ENCODE measurements at regions of chr2 and their contacts with region 1.

Region 1: DNA sequence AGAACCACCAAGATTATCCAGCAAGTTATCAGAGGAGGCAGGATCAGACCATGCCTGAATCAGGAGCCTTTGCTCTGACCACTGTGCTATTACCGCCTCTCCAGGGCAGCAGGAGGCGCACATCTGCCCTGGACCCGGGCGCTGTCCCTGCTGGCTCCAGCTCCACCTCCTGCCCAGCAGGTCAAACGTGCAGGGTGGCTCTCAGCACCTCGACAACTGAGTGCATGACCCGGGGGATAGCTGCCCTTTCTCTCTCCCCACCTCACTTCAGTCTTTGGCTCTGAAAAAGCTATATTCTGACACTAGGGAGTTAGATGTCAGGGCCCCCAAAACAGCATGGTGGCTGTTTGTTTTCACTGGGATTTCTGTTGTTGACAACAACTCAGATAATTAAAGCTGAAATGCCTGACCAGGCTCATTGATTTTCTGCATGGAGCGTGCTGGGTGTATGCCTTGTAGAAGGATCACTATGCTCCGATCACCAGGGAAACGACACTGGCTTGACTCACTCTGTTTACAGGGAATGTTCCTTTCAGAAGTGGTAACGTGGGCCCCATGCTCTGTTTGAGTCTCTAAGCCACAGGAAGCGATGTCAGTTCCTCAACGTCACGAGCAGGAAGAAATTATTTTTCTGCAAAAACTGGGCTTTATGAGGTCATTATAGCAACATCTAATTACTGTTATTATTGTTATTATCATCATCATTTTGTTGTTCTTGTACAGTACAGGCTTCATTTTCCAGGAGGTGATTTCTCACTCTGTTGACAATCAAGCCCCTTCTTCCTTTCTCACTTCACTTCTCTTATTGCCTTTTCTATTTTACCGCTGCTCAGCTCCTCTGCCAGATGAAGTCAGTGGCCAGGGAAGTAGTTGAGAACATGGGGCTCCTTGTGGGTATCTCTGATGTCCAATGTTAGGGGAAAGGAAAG is 125.6 kb downstream of the PLB1 start:
- DNase-seq: peak in 1 of 2 experiments; percentile 56
- H3K4me3 ChIP-seq: no peak overlapping the region
- H3K27ac ChIP-seq: no peak overlapping the region
- H3K4me1 ChIP-seq: peaks cover 2 to 12% (median 9%) of the 10 kb centered on the region in 4 experiments; a peak in 6 of 7 replicates
- H3K27me3 ChIP-seq: no peaks in the 10 kb centered on the region
- CTCF ChIP-seq: peak; percentile 78 to 83 (median 80)
- EP300 ChIP-seq: no peak
- POLR2A ChIP-seq: no peak
- RAD21 ChIP-seq: peak; percentile 69 to 79

Region 2: GRCh38 chr2:28610583-28611201 is 10.7 kb before region 1 on chr2:
- CTCF ChIA-PET with region 1: interaction called, 16 read pairs
- POLR2A ChIA-PET with region 1: interaction called, 3 read pairs
- DNase-seq: no peak
- H3K4me3 ChIP-seq: no peak overlapping the region
- H3K27ac ChIP-seq: no peak overlapping the region
- H3K4me1 ChIP-seq: peaks cover 0 to 7% (median 3%) of the 10 kb centered on the region in 4 experiments; a peak in 4 of 7 replicates
- H3K27me3 ChIP-seq: no peaks in the 10 kb centered on the region; a peak in 1 of 7 replicates
- CTCF ChIP-seq: no peak
- EP300 ChIP-seq: no peak
- POLR2A ChIP-seq: no peak
- RAD21 ChIP-seq: no peak

Region 3: GRCh38 chr2:28639836-28640235 is 18.4 kb after region 1 on chr2:
- CTCF ChIA-PET with region 1: interaction called, 13 read pairs
- POLR2A ChIA-PET with region 1: no interaction called
- DNase-seq: no peak
- H3K4me3 ChIP-seq: no peak overlapping the region
- H3K27ac ChIP-seq: no peak overlapping the region
- H3K4me1 ChIP-seq: peaks cover 0 to 9% (median 2%) of the 10 kb centered on the region in 4 experiments; a peak in 2 of 7 replicates
- H3K27me3 ChIP-seq: no peaks in the 10 kb centered on the region
- CTCF ChIP-seq: no peak
- EP300 ChIP-seq: no peak
- POLR2A ChIP-seq: no peak
- RAD21 ChIP-seq: no peak

Region 4: DNA sequence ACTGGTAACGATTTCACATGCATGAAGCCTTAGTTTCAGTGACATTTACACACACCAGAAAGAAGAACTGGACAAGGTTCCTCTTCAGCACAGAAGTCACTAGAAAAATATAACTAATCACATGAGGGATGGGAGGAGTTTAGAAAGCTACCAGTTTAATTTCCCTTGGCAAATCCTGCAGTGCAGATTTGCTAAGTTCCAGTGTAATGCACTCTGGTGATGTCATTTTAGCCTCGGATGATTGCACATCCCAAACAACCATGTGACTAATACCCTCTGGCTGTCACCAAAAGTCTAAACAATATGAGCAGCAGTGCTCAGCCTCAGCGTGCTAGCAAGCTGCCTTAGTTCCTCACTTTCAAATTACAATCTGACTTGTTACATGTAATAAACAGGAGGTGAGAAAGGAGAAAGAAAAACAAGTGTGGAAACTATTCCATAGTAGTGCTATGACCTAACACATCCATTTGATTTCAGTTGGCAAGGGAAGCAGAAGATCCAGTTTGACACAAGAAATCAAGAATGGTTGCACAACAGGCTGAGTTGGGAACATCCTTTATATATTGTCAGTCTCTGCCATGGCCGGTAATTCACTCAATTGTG is 94.9 kb after region 1 on chr2:
- CTCF ChIA-PET with region 1: no interaction called
- POLR2A ChIA-PET with region 1: no interaction called
- DNase-seq: no peak
- H3K4me3 ChIP-seq: no peak overlapping the region
- H3K27ac ChIP-seq: no peak overlapping the region
- H3K4me1 ChIP-seq: no peaks in the 10 kb centered on the region
- H3K27me3 ChIP-seq: no peaks in the 10 kb centered on the region
- CTCF ChIP-seq: no peak
- EP300 ChIP-seq: no peak
- POLR2A ChIP-seq: no peak
- RAD21 ChIP-seq: no peak